Tibial artery (tissue), 4 donors: ENCODE measurements at regions of chr5 and their contacts with region 1.

Region 1: GRCh38 chr5:43397995-43398394 is 14.2 kb downstream of the CCL28 start:
- DNase-seq: no peak
- H3K4me3 ChIP-seq: no peak overlapping the region
- H3K27ac ChIP-seq: no peak overlapping the region
- H3K4me1 ChIP-seq: peaks cover 0 to 5% (median 0%) of the 10 kb centered on the region in 4 donors
- H3K27me3 ChIP-seq: no peaks in the 10 kb centered on the region
- CTCF ChIP-seq: no peak

Region 2: GRCh38 chr5:43461066-43461465 is 63.1 kb after region 1 on chr5:
- intact Hi-C with region 1: loop called (anchors 2 kb)
- DNase-seq: no peak
- H3K4me3 ChIP-seq: no peak overlapping the region
- H3K27ac ChIP-seq: no peak overlapping the region
- H3K4me1 ChIP-seq: no peaks in the 10 kb centered on the region
- H3K27me3 ChIP-seq: no peaks in the 10 kb centered on the region
- CTCF ChIP-seq: no peak